ENCODE measurements at regions of chr22 and their contacts with region 1.

Region 1: DNA sequence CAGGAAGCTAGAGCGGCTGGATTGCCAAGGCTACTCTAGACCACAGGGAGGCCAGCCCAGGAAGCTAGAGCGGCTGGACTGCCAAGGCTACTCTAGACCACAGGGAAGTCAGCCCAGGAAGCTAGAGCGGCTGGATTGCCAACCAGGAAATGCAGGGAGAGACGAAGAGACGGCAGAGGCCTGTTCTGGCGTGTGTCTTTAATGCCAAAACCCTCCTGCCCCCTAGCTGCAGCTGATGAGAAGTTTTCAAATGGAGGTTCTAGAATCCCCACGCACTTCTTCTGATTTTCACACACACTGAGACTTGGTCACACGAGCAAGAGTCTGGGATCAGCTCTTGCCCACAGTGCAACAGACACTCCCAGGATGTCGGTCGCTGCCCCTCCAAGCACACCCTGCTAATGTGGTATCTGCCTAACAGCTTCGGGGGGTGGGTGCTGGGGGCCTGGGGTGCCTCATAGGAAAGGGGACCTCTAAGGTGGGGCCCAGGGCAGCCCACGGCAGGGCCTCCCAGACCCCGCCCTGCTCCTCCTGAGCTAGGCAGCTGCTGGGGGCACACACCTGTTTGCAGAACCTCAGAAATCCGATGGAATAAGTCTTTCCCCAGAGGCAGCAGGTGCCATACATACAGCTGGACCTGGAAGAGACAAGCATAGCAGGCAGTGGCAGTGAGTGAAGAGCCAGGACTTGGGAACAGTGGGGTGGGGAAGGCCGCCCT is 28.5 kb downstream of the MAFF start:
- H3K4me3 Mint-ChIP-seq: no peak overlapping the region
- H3K27ac Mint-ChIP-seq: peak overlapping the region; percentile 60
- H3K4me1 Mint-ChIP-seq: peaks cover 30% of the 10 kb centered on the region
- H3K27me3 Mint-ChIP-seq: peaks cover 8% of the 10 kb centered on the region

Region 2: DNA sequence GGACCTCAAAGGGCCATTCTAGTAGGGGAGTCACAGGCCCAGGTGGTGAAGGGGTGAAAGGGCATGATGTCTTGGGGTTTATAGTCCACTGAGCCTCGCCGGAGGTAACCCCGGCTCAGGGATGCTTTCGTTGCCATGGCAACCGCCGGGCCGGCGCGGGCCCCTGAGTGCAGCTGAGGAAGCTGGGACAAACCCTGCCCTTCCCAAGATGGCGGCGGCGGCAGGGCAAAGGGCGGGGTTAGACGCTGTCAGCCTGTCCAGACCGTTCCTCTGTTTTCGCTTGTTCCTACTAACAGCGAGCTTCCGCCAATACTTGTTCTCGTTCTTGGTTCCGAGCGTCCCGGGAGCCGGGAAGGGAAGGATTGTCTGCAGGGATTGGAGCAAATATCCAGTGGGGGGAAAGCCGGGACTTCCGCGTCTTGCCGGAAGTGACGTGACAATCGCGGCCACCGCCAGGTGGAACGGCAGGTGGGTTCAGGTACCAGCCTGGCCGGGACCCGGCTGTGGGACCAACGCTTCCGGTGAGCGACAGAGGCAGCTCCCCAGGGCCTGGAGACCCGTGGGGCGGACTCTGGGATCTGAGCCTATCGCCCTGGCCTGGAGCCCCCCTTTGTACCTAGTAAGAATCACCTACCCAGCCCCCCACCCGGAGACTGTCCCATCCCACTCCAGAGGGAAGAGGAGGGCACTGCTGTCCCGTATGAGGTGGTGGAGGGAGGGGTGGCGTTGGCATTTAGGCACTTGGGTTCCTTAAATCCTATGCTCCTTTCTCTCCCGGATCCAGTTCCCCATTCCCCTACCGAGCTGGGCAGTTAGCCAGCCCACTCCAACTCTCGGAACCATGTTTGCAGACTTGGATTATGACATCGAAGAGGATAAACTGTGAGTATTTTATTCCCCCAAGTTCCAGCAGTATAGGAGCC is 173.0 kb before region 1 on chr22 and contains the start of gene PICK1:
- intact Hi-C with region 1: loop called (anchors 5 kb)
- H3K4me3 Mint-ChIP-seq: peak within 1 kb of the TSS; percentile 84
- H3K27ac Mint-ChIP-seq: peak within 1 kb of the TSS; percentile 95
- H3K4me1 Mint-ChIP-seq: peaks cover 25% of the 10 kb centered on the region
- H3K27me3 Mint-ChIP-seq: peaks cover 28% of the 10 kb centered on the region

Region 3: GRCh38 chr22:38104084-38104483 is 126.2 kb before region 1 on chr22:
- intact Hi-C with region 1: loop called (anchors 5 kb)
- H3K4me3 Mint-ChIP-seq: no peak overlapping the region
- H3K27ac Mint-ChIP-seq: no peak overlapping the region
- H3K4me1 Mint-ChIP-seq: no peaks in the 10 kb centered on the region
- H3K27me3 Mint-ChIP-seq: peaks cover 33% of the 10 kb centered on the region

Region 4: DNA sequence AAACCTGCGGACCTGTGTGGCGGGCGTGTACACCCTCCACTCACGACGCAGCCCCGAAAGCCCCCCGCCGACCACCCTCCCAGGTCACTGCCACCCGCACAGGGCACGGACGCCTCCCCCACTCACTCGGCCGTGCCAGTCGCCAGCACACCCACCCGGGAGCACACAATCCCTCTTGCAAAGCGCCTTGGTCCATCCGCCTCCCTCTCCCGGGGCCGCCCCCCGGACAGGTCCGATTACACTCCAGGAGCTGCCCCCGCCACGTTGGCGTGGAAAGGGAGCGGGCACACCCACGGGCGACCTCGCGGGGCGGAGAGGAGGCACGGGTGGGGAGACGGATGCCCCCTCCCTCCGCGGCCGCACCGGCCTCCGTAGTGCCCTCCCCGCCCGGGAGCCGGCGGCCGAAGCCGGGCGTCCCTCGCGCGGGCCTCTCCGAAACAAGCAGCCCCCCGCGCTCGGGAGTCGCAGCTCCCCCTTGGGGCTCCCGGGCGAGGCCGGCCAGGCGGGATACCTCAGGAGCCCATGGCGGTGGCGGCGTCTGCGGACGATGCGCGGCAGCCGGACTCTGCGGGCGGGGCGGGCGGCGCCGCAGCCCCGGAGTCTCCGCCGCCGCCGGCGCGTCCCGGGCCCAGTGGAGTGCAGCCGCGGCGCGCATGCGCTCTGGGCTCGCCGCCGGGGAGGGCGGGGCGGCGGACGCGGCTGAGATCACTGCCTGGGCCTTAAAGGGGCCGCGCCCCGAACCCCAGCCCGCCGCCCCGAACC is 42.3 kb after region 1 on chr22 and contains the start of gene TMEM184B:
- intact Hi-C with region 1: no loop called
- H3K4me3 Mint-ChIP-seq: peak within 1 kb of the TSS; percentile 89
- H3K27ac Mint-ChIP-seq: peak within 1 kb of the TSS; percentile 90
- H3K4me1 Mint-ChIP-seq: peaks cover 54% of the 10 kb centered on the region
- H3K27me3 Mint-ChIP-seq: peaks cover 29% of the 10 kb centered on the region

Measured in dendritic cell treated with granulocyte-macrophage colony-stimulating factor and Interleukin-4, amounts not matched to agents 40 ng/mL and 50 ng/mL, for 4 days (primary cell).